ENCODE measurements at regions of chr17 and their contacts with region 1.

Region 1: GRCh38 chr17:35286120-35286781 is 43.4 kb downstream of the SLFN5 start:
- DNase-seq: peak in 7 of 10 donors; percentile 15 to 62 (median 40)
- ATAC-seq: peak; percentile 99
- H3K4me3 Mint-ChIP-seq: peak overlapping the region; percentile 14 to 64 (median 44)
- H3K27ac Mint-ChIP-seq: peak overlapping the region; percentile 77 to 94 (median 87)
- H3K4me1 Mint-ChIP-seq: peaks cover 26 to 58% (median 50%) of the 10 kb centered on the region in 4 donors
- H3K27me3 Mint-ChIP-seq: no peaks in the 10 kb centered on the region

Region 2: GRCh38 chr17:35254107-35254802 is 32.0 kb before region 1 on chr17:
- POLR2A ChIA-PET with region 1: no interaction called
- DNase-seq: no peak
- ATAC-seq: no peak
- H3K4me3 Mint-ChIP-seq: peak overlapping the region in 9 of 10 donors; percentile 52 to 71 (median 63)
- H3K27ac Mint-ChIP-seq: peak overlapping the region; percentile 74 to 89 (median 86)
- H3K4me1 Mint-ChIP-seq: peaks cover 45 to 94% (median 88%) of the 10 kb centered on the region in 4 donors
- H3K27me3 Mint-ChIP-seq: no peaks in the 10 kb centered on the region

Region 3: GRCh38 chr17:35273684-35274083 is 12.6 kb before region 1 on chr17:
- POLR2A ChIA-PET with region 1: interaction called, 11 read pairs
- DNase-seq: no peak
- ATAC-seq: no peak
- H3K4me3 Mint-ChIP-seq: peak overlapping the region in 2 of 10 donors; percentile 71 to 73
- H3K27ac Mint-ChIP-seq: peak overlapping the region in 9 of 10 donors; percentile 4 to 87 (median 64)
- H3K4me1 Mint-ChIP-seq: peaks cover 26 to 75% (median 68%) of the 10 kb centered on the region in 4 donors
- H3K27me3 Mint-ChIP-seq: no peaks in the 10 kb centered on the region

Region 4: GRCh38 chr17:35460354-35460851 is 174.2 kb after region 1 on chr17:
- POLR2A ChIA-PET with region 1: no interaction called
- DNase-seq: peak; percentile 31 to 84 (median 70)
- ATAC-seq: peak; percentile 86 to 94
- H3K4me3 Mint-ChIP-seq: peak overlapping the region; percentile 70 to 91 (median 83)
- H3K27ac Mint-ChIP-seq: peak overlapping the region; percentile 83 to 97 (median 92)
- H3K4me1 Mint-ChIP-seq: peaks cover 11 to 45% (median 27%) of the 10 kb centered on the region in 4 donors
- H3K27me3 Mint-ChIP-seq: no peaks in the 10 kb centered on the region

Measured in naive thymus-derived CD8-positive, alpha-beta T cell (primary cell).